Psoas muscle (tissue), 8 donors: ENCODE measurements at regions of chr11 and their contacts with region 1.

Region 1: GRCh38 chr11:1917671-1918516 is 1.6 kb upstream of the TNNT3 start:
- DNase-seq: peak; percentile 59 to 86
- ATAC-seq: peak; percentile 41 to 51 (median 46)
- H3K4me3 ChIP-seq: peak overlapping the region; percentile 53
- H3K27ac ChIP-seq: peak overlapping the region; percentile 94
- H3K4me1 ChIP-seq: peaks cover 63% of the 10 kb centered on the region
- H3K27me3 ChIP-seq: no peaks in the 10 kb centered on the region
- CTCF ChIP-seq: peak; percentile 79

Region 2: DNA sequence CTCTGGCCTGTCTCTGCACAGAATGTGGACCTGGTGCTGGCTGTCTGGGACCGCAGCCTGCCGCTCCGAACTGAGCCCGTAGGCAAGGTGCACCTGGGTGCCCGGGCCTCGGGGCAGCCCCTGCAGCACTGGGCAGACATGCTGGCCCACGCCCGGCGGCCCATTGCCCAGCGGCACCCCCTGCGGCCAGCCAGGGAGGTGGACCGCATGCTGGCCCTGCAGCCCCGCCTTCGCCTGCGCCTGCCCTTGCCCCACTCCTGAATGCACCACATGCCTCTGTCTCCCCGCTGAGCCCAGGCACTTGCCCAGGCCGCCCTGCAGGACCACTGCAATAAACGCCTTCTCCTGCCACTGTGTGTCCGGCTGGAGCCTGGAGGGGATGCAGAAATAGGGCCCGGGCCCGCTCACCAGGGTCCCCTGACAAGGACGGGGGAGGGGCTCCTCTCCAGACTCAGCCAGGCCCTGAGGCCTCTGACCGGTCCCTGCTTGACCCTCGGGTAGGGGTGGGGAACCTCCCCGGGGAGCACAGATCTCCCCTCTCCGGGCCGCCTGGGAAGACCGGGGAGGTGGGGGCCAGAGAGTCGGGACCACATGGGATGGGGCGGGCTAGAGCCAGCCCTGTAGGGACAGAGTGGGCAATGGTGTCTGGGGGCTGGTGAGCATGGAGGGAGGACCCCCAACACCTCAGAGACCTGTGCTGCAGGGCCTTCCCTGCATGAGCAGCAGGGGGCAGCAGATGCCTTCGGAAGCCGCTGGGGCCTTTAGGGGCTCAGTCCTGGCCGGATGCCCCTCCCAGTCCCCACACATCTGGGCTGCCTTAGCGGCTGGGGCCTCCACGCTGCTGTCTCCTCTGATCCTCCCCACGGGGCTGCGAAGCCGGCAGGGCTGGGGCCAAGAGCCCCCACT is 80.5 kb before region 1 on chr11:
- intact Hi-C with region 1: loop called (anchors 1 to 10 kb)
- DNase-seq: peak; percentile 75 to 90
- ATAC-seq: peak; percentile 34 to 60 (median 48)
- H3K4me3 ChIP-seq: peak overlapping the region; percentile 28
- H3K27ac ChIP-seq: peak overlapping the region; percentile 93
- H3K4me1 ChIP-seq: peaks cover 11% of the 10 kb centered on the region
- H3K27me3 ChIP-seq: no peaks in the 10 kb centered on the region
- CTCF ChIP-seq: peak; percentile 88

Region 3: DNA sequence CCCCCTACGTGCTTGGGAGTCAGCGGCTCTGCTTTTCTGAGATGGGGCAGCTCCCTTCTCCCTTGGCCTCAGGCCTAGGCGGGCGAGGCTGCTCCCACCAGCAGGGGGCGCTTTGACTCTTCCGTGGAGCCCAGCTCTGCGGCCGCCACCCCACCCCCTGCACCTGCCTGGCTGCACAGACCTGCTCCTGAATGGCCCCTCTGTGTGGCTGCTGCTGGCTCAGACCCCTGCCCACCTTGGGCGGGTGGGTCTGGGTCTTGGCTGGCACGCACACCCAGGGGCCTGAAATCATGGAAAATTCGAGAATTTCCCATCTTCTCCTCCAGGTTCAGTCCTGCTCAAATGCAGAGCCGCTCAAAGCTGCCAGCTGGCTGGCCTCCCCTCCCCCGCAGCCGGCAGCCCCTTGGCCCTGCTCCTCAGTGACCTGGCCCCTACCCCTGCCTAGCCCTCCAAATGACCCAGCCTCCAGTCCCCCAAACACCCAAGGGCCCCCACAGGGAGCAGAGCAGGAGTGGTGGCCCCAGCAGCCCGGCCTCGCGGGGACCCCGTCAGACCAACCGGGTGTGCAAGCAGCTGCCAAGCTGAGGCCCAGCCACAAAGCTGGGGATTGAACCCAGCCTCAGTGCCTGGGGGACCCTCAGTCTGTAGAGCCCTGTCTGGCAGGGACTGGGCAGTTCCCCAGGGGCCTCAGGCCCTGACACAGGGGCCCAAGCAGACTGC is 35.2 kb before region 1 on chr11:
- intact Hi-C with region 1: loop called (anchors 5 kb)
- DNase-seq: peak; percentile 85 to 93
- ATAC-seq: peak; percentile 86 to 94 (median 92)
- H3K4me3 ChIP-seq: no peak overlapping the region
- H3K27ac ChIP-seq: peak overlapping the region; percentile 84
- H3K4me1 ChIP-seq: peaks cover 20% of the 10 kb centered on the region
- H3K27me3 ChIP-seq: no peaks in the 10 kb centered on the region
- CTCF ChIP-seq: peak; percentile 94

Region 4: GRCh38 chr11:1889224-1890120 is 28.4 kb before region 1 on chr11:
- intact Hi-C with region 1: loop called (anchors 1 kb)
- DNase-seq: peak in 1 of 2 donors; percentile 48
- ATAC-seq: peak in 1 of 4 donors; percentile 8
- H3K4me3 ChIP-seq: no peak overlapping the region
- H3K27ac ChIP-seq: no peak overlapping the region
- H3K4me1 ChIP-seq: peaks cover 35% of the 10 kb centered on the region
- H3K27me3 ChIP-seq: no peaks in the 10 kb centered on the region
- CTCF ChIP-seq: no peak

Region 5: DNA sequence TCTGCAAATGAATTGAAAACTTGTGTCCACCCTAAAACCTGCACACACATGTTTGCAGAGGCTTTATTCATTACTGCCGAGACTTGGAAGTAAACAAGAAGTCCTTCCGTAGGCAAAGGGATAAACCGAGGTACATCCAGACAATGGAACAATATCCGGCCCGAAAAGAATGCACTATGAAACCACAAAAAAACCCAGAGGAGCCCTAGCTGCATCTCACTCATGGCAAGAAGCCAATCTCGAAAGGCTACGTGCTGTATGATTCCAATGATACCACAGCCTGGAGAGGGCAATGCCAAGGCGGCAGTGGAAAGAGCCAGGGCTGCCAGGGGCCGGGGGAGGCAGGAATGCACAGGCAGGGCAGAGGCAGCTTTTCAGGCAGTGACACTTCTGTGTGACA is 26.1 kb after region 1 on chr11:
- intact Hi-C with region 1: loop called (anchors 1 kb)
- DNase-seq: peak in 1 of 2 donors; percentile 41
- ATAC-seq: no peak
- H3K4me3 ChIP-seq: no peak overlapping the region
- H3K27ac ChIP-seq: no peak overlapping the region
- H3K4me1 ChIP-seq: no peaks in the 10 kb centered on the region
- H3K27me3 ChIP-seq: no peaks in the 10 kb centered on the region
- CTCF ChIP-seq: no peak